ENCODE measurements at regions of chr15 and their contacts with region 1.

Region 1: DNA sequence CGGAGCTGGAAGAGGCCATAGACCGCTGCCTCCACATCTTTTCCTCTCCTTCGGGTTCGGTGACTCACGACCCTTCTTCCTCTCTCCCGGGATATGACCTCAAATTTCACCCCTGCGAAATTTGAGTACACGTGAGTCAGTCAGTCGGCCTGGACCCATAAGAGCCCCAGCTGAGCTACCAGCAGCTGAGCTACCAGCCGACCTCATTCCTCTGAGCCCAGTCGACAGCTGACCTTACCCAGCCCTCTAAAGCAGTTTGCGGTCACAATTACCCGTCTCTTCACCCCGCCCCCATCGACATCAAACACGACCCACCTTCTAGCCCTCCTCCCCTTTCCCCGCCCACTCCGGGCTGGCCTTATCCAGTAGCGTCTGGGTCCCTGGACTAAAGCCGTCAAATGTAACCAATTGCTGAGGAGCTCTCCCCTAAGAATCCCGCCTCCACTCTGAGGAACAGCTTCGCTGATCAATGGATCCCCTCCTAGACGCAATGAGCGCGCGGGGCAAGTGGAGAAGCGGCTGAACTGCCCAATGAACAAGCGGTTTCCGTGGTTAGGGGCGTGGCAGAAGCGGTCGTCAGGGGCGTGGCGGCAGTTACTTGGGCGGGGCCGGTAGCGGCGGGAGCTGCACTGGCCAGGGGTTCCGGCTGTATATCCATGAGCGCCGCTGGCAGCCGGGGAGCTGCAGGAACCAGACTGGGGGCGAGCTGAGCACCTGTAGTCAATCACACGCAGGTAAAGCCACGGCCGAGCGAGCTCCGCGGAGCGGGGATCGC is at the start of gene ABHD2:
- DNase-seq: peak; percentile 96 to 100 (median 98)
- ATAC-seq: peak; percentile 93
- H3K4me3 ChIP-seq: peak within 1 kb of the TSS; percentile 72
- H3K27ac ChIP-seq: peak within 1 kb of the TSS; percentile 80
- H3K4me1 ChIP-seq: peaks cover 33 to 34% of the 10 kb centered on the region in 2 experiments
- H3K27me3 ChIP-seq: no peaks in the 10 kb centered on the region
- CTCF ChIP-seq: no peak
- EP300 ChIP-seq: peak; percentile 61
- POLR2A ChIP-seq: peak; percentile 85
- RAD21 ChIP-seq: no peak
- polyA plus RNA-seq, gene ABHD2: 16.9 to 18.1 TPM

Region 2: GRCh38 chr15:88630131-88630721 is 457.8 kb before region 1 on chr15:
- CTCF ChIA-PET with region 1: no interaction called
- POLR2A ChIA-PET with region 1: no interaction called
- in situ Hi-C with region 1: no loop called
- intact Hi-C with region 1: no loop called
- DNase-seq: no peak
- ATAC-seq: no peak; the same call in 2 of the 3 replicates
- H3K4me3 ChIP-seq: no peak overlapping the region
- H3K27ac ChIP-seq: no peak overlapping the region
- H3K4me1 ChIP-seq: peaks cover 0 to 21% of the 10 kb centered on the region in 2 experiments; a peak in 3 of 5 replicates
- H3K27me3 ChIP-seq: no peaks in the 10 kb centered on the region
- CTCF ChIP-seq: no peak
- EP300 ChIP-seq: no peak
- POLR2A ChIP-seq: no peak
- RAD21 ChIP-seq: no peak

Region 3: DNA sequence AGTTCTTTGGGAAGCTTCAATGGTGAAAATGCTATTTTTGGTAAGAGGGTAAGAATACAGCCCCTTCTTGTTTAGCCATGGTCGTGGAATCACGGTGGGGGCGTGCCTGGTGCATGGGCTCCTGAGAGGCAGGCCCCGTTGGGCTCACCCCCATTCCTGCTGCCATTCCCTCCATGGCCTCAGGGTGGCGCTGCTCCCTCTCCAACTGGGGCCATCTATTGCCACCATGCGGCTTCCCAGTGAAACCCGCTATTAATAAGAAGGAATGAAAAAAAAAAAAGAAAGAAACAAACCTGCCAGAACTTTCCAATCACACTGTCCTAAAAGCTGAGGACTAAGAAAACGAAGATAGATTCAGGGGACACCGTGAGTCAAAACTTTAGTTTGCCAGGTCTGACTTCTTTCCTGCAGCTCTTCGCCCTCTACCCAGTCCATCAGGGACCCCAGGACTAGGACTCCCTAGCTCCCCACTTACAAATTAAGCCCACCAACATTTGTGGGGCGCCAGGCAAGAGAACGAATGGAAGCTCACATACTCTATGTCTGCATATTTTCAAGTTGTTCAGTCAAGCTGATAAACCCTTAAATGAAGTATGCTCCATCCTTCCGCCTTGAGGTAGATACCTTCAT is 30.4 kb before region 1 on chr15:
- CTCF ChIA-PET with region 1: no interaction called
- POLR2A ChIA-PET with region 1: no interaction called
- in situ Hi-C with region 1: no loop called
- intact Hi-C with region 1: loop called (anchors 2 kb)
- DNase-seq: peak; percentile 89 to 93 (median 91)
- ATAC-seq: peak; percentile 96
- H3K4me3 ChIP-seq: no peak overlapping the region
- H3K27ac ChIP-seq: no peak overlapping the region
- H3K4me1 ChIP-seq: peaks cover 8 to 14% of the 10 kb centered on the region in 2 experiments; a peak in 3 of 5 replicates
- H3K27me3 ChIP-seq: no peaks in the 10 kb centered on the region
- CTCF ChIP-seq: peak; percentile 99 to 100 (median 100)
- EP300 ChIP-seq: no peak
- POLR2A ChIP-seq: no peak
- RAD21 ChIP-seq: peak; percentile 97 to 98

Region 4: DNA sequence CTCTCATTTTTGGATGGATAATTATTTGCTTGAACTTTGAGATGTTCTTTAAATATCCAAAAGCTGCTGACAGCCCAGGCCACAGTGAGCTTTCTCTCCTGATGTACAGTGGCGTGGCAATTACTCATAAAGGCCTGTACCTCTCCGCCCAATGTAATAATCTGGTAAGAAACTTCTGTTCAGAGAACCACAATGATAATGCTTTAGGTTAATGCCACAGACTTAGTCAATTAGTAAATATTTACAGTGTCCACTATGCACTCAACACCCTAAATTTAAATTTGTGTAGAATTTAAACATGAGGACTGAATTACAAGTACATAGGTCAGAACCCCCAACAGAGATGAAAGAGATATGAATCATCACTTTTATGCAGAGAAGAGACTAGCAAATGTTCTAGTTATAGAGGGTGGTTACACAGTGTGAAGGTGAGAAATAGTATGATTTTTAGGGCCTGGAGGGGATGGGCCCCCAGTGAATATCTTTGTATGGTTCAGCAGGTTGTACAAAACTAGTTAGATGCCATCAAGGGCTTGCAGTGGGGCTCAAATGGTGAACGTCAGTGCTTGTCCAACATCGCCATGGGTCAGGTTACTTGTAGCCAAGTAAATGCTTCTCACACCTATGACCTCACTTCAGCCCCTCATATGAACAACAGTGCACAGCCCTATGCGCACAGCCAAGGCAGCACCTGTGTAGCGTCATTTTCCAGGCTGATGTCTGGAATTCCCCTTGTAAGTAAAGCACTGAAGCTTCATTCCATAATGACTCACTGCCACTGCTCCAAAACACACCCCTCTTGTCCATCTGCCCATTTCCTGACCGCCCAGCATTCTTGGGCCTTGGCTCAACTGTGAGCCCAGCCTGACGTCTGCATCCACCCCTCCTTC is 13.5 kb after region 1 on chr15:
- CTCF ChIA-PET with region 1: no interaction called
- POLR2A ChIA-PET with region 1: interaction called, 62 read pairs
- in situ Hi-C with region 1: no loop called
- intact Hi-C with region 1: no loop called
- DNase-seq: no peak
- ATAC-seq: no peak
- H3K4me3 ChIP-seq: no peak overlapping the region
- H3K27ac ChIP-seq: no peak overlapping the region; the same call in 2 of the 3 replicates
- H3K4me1 ChIP-seq: peaks cover 0 to 15% of the 10 kb centered on the region in 2 experiments; a peak in 4 of 5 replicates
- H3K27me3 ChIP-seq: no peaks in the 10 kb centered on the region
- CTCF ChIP-seq: no peak
- EP300 ChIP-seq: no peak
- POLR2A ChIP-seq: no peak
- RAD21 ChIP-seq: no peak

Region 5: DNA sequence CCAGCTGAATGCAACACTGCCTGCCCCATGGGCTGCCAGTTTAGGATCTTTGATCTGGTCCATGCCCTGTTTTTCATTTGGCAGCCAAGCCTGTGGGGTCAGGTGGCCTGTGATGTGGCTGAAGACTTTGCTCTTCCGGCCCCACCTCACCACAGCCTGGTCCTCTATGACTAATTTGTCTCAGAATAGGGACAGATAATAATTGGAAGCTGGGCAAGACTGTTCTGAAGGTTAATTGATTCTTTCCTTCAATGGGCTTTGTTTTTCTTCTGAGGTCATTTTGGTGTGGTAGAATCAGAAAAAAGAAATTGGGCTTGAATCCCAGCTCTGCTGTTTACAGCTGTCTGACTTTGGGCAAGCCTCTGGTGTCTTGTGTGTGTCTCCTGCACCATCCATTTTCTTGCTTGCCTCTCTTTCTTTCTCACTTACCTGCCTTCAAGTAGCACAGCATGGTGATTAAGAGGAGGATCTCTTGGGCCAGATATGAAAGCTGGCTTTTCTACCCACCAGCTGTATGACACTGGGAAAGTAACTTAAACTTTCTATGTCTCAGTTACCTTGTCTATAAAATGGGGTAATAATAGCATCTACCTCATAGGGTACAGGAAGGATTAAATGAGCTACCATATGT is 24.4 kb after region 1 on chr15:
- CTCF ChIA-PET with region 1: interaction called, 3 read pairs
- POLR2A ChIA-PET with region 1: interaction called, 20 read pairs
- in situ Hi-C with region 1: no loop called
- intact Hi-C with region 1: no loop called
- DNase-seq: no peak
- ATAC-seq: no peak
- H3K4me3 ChIP-seq: no peak overlapping the region
- H3K27ac ChIP-seq: no peak overlapping the region
- H3K4me1 ChIP-seq: peaks cover 4 to 40% of the 10 kb centered on the region in 2 experiments; a peak in 4 of 5 replicates
- H3K27me3 ChIP-seq: no peaks in the 10 kb centered on the region
- CTCF ChIP-seq: no peak
- EP300 ChIP-seq: no peak
- POLR2A ChIP-seq: no peak
- RAD21 ChIP-seq: no peak

Region 6: GRCh38 chr15:89129123-89129815 is 41.3 kb after region 1 on chr15:
- CTCF ChIA-PET with region 1: interaction called, 4 read pairs
- POLR2A ChIA-PET with region 1: interaction called, 6 read pairs
- in situ Hi-C with region 1: no loop called
- intact Hi-C with region 1: loop called (anchors 2 kb)
- DNase-seq: peak; percentile 55 to 65 (median 59)
- ATAC-seq: peak; percentile 90
- H3K4me3 ChIP-seq: no peak overlapping the region
- H3K27ac ChIP-seq: no peak overlapping the region
- H3K4me1 ChIP-seq: peaks cover 0 to 18% of the 10 kb centered on the region in 2 experiments; a peak in 2 of 5 replicates
- H3K27me3 ChIP-seq: no peaks in the 10 kb centered on the region
- CTCF ChIP-seq: peak; percentile 81 to 90 (median 84)
- EP300 ChIP-seq: no peak
- POLR2A ChIP-seq: no peak
- RAD21 ChIP-seq: peak; percentile 63 to 74